ENCODE measurements at regions of chr14 and their contacts with region 1.

Region 1: DNA sequence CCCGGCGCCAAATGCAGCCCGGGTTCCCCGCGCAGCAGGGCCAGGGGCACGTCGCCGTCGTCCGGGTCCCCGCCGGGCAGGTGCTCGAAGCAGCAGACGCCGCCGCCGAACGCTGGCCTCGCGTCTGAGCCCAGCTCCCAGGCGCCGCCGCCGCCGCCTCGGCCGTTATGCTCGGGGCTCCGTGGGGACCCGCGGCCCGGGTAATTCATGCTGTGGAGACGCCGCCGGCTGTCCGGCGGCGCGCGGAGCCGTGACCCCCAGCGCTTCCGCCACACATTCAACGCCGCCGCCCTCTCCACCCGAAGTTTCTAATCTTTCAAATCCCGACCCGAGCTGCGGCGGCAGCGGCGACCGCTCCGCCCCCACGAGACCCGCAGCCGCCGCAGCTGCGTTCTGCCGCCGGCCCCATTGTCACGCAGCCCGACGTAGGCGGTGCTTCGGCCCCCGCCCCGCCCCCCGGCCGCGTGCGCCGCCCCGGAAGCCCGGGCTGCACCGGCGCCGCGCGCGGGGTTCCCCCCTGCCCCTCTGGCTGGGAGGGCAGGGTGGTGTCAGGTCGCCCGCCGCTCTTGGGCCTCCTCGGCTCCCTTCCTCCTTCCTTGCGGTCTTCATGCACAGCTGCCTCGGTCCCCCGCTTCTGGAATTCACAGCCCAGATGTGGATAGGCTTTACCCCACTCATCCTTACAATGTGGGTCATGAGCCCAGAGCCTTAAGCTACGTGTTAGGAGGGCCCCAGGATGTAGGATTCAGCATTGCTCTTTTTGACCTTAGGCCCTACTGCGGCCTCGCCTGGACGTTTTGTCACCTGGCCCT is at the start of gene DDHD1:
- DNase-seq: peak; percentile 57
- H3K4me3 ChIP-seq: peak within 1 kb of the TSS; percentile 74 to 91 (median 82)
- H3K27ac ChIP-seq: peak within 1 kb of the TSS; percentile 41
- H3K4me1 ChIP-seq: peaks cover 12% of the 10 kb centered on the region
- H3K27me3 ChIP-seq: no peaks in the 10 kb centered on the region
- CTCF ChIP-seq: no peak
- total RNA-seq, gene DDHD1: 18.0 to 27.3 TPM

Region 2: GRCh38 chr14:52791203-52792096 is 361.6 kb before region 1 on chr14 and contains the start of gene GNPNAT1:
- CTCF ChIA-PET with region 1: no interaction called
- dilution Hi-C with region 1: no loop called
- in situ Hi-C with region 1: no loop called
- intact Hi-C with region 1: loop called (anchors 5 kb)
- DNase-seq: peak; percentile 90
- H3K4me3 ChIP-seq: peak within 1 kb of the TSS; percentile 79 to 91 (median 87)
- H3K27ac ChIP-seq: peak within 1 kb of the TSS; percentile 89
- H3K4me1 ChIP-seq: peaks cover 9% of the 10 kb centered on the region
- H3K27me3 ChIP-seq: no peaks in the 10 kb centered on the region
- CTCF ChIP-seq: no peak
- total RNA-seq, gene GNPNAT1: 24.0 to 44.9 TPM

Region 3: GRCh38 chr14:52824507-52824906 is 328.6 kb before region 1 on chr14:
- CTCF ChIA-PET with region 1: no interaction called
- dilution Hi-C with region 1: no loop called
- in situ Hi-C with region 1: no loop called
- intact Hi-C with region 1: loop called (anchors 10 kb)
- DNase-seq: no peak
- H3K4me3 ChIP-seq: no peak overlapping the region
- H3K27ac ChIP-seq: no peak overlapping the region
- H3K4me1 ChIP-seq: no peaks in the 10 kb centered on the region
- H3K27me3 ChIP-seq: no peaks in the 10 kb centered on the region
- CTCF ChIP-seq: no peak

Region 4: GRCh38 chr14:53113989-53114388 is 39.1 kb before region 1 on chr14:
- CTCF ChIA-PET with region 1: no interaction called
- dilution Hi-C with region 1: loop called (anchors 5 kb)
- in situ Hi-C with region 1: no loop called
- intact Hi-C with region 1: no loop called
- DNase-seq: no peak
- H3K4me3 ChIP-seq: no peak overlapping the region
- H3K27ac ChIP-seq: no peak overlapping the region
- H3K4me1 ChIP-seq: no peaks in the 10 kb centered on the region
- H3K27me3 ChIP-seq: no peaks in the 10 kb centered on the region
- CTCF ChIP-seq: no peak

Region 5: GRCh38 chr14:53399057-53399456 is 246.0 kb after region 1 on chr14:
- CTCF ChIA-PET with region 1: no interaction called
- dilution Hi-C with region 1: no loop called
- in situ Hi-C with region 1: no loop called
- intact Hi-C with region 1: no loop called
- DNase-seq: no peak
- H3K4me3 ChIP-seq: no peak overlapping the region
- H3K27ac ChIP-seq: no peak overlapping the region
- H3K4me1 ChIP-seq: no peaks in the 10 kb centered on the region
- H3K27me3 ChIP-seq: no peaks in the 10 kb centered on the region
- CTCF ChIP-seq: peak; percentile 39 to 42

Measured in mammary epithelial cell (primary cell).